Endothelial cell of umbilical vein (primary cell): ENCODE measurements at regions of chr22 and their contacts with region 1.

Region 1: DNA sequence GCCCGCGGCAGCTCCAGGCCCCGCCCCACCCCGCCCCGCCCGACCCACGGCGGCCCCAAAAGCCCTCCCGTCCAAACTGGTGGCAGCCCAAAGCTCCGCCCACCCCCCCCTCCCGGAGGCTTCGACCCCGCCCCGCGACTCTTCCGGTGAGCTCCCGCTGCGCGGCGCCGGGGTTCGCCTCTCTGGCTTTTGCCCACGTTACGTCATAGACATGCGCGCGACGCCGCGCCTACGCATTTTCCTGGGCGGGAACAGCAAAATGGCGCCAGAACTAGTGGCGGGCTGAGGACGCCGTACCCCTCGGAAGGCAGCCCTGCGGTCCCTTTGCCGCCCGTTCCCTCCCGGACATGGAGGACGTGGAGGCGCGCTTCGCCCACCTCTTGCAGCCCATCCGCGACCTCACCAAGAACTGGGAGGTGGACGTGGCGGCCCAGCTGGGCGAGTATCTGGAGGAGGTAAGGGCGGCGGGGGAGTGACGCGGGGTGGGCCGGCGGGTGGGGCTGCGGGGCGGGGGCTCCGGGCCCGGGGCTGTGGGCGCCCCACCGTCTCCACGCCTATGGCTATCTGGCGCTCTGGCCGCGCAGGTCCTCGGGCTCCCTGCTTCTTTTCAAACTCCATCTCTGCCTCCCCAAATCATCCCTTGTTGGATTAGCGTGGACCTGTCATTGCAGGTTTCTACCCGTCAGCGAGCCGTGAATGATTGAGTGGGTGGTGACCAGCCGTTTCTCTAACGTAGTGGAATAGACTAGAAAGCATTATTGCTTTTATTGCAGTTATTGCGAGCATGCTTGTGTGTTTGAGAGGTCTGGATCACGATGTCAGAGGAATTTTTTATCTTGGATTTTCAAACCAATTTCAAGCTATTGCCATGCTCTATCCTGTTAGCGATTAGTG is at the start of gene NCAPH2:
- DNase-seq: peak; percentile 97
- H3K4me3 ChIP-seq: peak within 1 kb of the TSS; percentile 68 to 98 (median 79)
- H3K27ac ChIP-seq: peak within 1 kb of the TSS; percentile 72
- H3K4me1 ChIP-seq: peaks cover 14% of the 10 kb centered on the region
- H3K27me3 ChIP-seq: no peaks in the 10 kb centered on the region
- CTCF ChIP-seq: no peak
- POLR2A ChIP-seq: peak; percentile 75
- total RNA-seq, gene NCAPH2: 42.4 and 43.1 TPM in 2 replicates

Region 2: DNA sequence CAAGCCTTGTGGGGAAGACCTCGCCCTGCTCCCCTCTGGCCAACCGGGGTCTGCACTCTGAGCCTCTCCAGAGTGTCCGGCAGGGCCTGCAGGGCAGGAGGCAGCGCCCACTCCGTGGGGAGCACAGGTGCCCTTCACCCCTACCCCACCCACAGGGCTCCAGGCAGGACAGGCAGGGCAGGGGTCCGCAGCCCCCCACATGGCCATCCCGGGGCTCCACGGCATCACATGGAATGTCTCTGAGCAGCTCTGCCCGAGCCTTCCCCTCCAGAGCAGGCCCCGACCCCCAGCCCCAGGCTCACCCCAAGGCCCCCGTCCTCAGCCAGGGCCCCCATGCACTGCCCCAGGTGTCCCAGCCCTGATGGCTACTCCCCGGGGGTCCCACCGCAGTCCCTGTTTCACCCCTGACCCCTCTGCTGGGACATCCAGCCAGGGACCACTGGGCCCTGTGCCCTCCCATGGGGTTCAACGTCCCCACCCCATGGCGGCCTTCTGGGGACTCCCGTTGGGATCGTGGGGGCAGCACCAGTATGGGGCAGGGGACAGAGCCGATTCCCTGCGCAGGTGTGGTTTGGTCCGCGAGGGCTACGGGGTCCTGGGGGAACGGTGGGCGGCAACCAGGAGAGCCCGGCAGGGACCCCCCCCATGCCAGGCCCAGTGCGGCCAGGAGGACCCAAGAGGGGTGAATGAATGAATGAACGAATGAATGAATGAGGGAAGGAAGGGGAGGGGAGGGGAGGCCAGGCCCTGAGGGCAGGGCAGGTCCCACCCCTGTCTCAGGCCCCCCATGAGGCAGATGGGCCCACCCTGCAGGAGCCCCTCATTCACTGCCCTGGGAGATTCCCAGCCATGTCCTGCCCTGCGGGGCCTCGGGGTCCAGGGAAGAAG is 758.1 kb before region 1 on chr22:
- CTCF ChIA-PET with region 1: no interaction called
- POLR2A ChIA-PET with region 1: no interaction called
- dilution Hi-C with region 1: no loop called
- intact Hi-C with region 1: no loop called
- DNase-seq: no peak
- H3K4me3 ChIP-seq: no peak overlapping the region
- H3K27ac ChIP-seq: no peak overlapping the region
- H3K4me1 ChIP-seq: no peaks in the 10 kb centered on the region
- H3K27me3 ChIP-seq: peaks cover 0 to 1% of the 10 kb centered on the region in 2 experiments
- CTCF ChIP-seq: no peak
- POLR2A ChIP-seq: no peak

Region 3: DNA sequence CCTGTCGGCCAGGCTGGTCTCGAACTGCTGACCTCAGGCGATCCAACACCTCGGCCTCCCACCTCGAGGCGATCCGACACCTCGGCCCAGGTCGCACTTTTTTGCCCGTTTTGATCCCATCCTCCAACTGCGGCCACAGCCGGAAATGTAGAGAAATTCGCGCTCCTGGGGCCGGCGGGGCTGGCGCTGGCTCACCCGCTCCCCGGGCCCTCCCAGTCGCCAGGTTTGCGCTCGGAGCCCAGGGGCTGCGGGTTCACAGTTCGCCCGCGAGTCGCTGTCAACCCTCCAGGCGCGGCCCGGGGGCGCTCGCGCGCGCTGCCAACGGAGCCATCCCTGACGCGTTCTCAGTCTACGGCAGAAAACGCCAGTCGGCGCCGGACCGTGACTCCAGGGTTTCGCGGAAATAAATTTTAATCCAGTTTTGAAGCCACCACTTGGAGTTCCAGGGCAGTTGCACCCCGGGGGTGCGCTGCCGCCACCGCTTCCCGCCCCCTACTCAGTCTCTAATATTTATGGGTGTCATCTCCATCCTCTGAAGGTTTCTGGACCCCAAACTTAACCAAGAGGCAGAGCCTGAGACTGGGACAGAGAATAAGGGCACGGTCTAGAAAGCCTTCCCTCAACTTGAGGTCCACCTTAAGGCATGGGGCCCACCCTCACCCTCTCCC is 36.0 kb after region 1 on chr22:
- CTCF ChIA-PET with region 1: no interaction called
- POLR2A ChIA-PET with region 1: no interaction called
- dilution Hi-C with region 1: no loop called
- intact Hi-C with region 1: no loop called
- DNase-seq: peak; percentile 53
- H3K4me3 ChIP-seq: no peak overlapping the region
- H3K27ac ChIP-seq: no peak overlapping the region
- H3K4me1 ChIP-seq: no peaks in the 10 kb centered on the region
- H3K27me3 ChIP-seq: peaks cover 20 to 33% of the 10 kb centered on the region in 2 experiments
- CTCF ChIP-seq: peak; percentile 49 to 81
- POLR2A ChIP-seq: no peak

Region 4: DNA sequence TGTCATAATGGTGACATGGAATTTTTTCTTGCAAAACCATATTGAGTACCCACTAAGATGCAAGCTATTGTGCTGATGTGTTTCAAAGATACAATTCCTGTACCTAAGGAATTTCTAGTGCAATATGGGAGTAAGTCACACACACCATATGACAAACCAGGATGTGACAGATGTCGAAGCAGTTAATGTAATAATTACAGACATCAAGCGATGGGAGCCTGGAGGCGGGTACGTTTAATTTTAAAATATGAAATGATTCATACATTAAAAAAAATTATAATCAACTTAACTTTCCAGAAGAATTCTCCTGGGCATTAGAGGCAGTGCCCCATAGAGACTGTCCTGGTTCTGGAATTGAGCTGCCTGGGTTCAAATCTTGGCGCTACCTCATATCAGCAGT is 48.5 kb after region 1 on chr22:
- CTCF ChIA-PET with region 1: no interaction called
- POLR2A ChIA-PET with region 1: no interaction called
- dilution Hi-C with region 1: no loop called
- intact Hi-C with region 1: no loop called
- DNase-seq: no peak
- H3K4me3 ChIP-seq: no peak overlapping the region
- H3K27ac ChIP-seq: no peak overlapping the region
- H3K4me1 ChIP-seq: no peaks in the 10 kb centered on the region
- H3K27me3 ChIP-seq: peaks cover 11 to 12% of the 10 kb centered on the region in 2 experiments
- CTCF ChIP-seq: no peak
- POLR2A ChIP-seq: no peak

Region 5: GRCh38 chr22:50582562-50583293 is 74.5 kb after region 1 on chr22 and contains the start of gene CHKB:
- CTCF ChIA-PET with region 1: no interaction called
- POLR2A ChIA-PET with region 1: no interaction called
- dilution Hi-C with region 1: no loop called
- intact Hi-C with region 1: loop called (anchors 2 kb)
- DNase-seq: peak; percentile 98
- H3K4me3 ChIP-seq: peak within 1 kb of the TSS; percentile 73 to 87 (median 85)
- H3K27ac ChIP-seq: peak within 1 kb of the TSS; percentile 87
- H3K4me1 ChIP-seq: peaks cover 13% of the 10 kb centered on the region
- H3K27me3 ChIP-seq: peaks cover 0 to 2% of the 10 kb centered on the region in 2 experiments
- CTCF ChIP-seq: no peak
- POLR2A ChIP-seq: peak; percentile 77
- total RNA-seq, gene CHKB: 57.7 and 62.4 TPM in 2 replicates